Right lobe of liver (tissue), 6 donors: ENCODE measurements at regions of chr5 and their contacts with region 1.

Region 1: GRCh38 chr5:80487829-80488721 is at the start of gene FAM151B:
- DNase-seq: peak; percentile 93 to 97 (median 96)
- ATAC-seq: peak; percentile 95 to 97 (median 96)
- H3K4me3 ChIP-seq: peak within 1 kb of the TSS; percentile 62 to 72 (median 69)
- H3K27ac ChIP-seq: peak within 1 kb of the TSS; percentile 47 to 59 (median 53)
- H3K4me1 ChIP-seq: peaks cover 0 to 13% (median 2%) of the 10 kb centered on the region in 4 donors
- H3K27me3 ChIP-seq: no peaks in the 10 kb centered on the region
- CTCF ChIP-seq: peak in 3 of 4 donors; percentile 30 to 41 (median 32)
- POLR2A ChIP-seq: peak; percentile 69
- total RNA-seq, gene FAM151B: 0.81 to 1.6 (median 1.3) TPM

Region 2: DNA sequence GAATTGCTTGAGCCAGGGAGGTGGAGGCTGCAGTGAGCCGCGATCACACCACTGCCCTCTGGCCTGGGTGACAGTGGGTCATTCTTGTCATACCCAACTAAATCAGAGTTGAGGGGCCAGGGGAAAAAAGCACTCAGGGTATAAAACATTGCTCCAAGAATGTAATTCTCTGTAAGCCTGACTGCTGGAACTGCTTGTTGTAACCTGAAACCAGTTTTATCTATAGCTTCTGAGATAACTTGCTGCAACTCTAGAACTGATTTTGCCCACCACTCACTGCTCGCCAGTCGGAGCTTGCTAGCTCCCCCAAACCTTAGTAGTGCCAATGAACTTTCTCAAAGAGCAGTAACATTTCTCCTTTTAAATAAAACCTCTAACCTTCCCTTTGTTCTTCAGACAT is 156.8 kb after region 1 on chr5:
- intact Hi-C with region 1: loop called in 1 of 2 experiments (anchors 10 kb)
- DNase-seq: no peak
- ATAC-seq: no peak
- H3K4me3 ChIP-seq: no peak overlapping the region
- H3K27ac ChIP-seq: no peak overlapping the region
- H3K4me1 ChIP-seq: no peaks in the 10 kb centered on the region
- H3K27me3 ChIP-seq: no peaks in the 10 kb centered on the region
- CTCF ChIP-seq: no peak
- POLR2A ChIP-seq: no peak